ENCODE measurements at regions of chr4 and their contacts with region 1.

Region 1: GRCh38 chr4:117134386-117134785 is 49.0 kb upstream of the TRAM1L1 start:
- ATAC-seq: peak; percentile 55 to 98 (median 67)
- H3K4me3 ChIP-seq: no peak overlapping the region
- H3K27ac ChIP-seq: no peak overlapping the region
- H3K4me1 ChIP-seq: no peaks in the 10 kb centered on the region

Region 2: DNA sequence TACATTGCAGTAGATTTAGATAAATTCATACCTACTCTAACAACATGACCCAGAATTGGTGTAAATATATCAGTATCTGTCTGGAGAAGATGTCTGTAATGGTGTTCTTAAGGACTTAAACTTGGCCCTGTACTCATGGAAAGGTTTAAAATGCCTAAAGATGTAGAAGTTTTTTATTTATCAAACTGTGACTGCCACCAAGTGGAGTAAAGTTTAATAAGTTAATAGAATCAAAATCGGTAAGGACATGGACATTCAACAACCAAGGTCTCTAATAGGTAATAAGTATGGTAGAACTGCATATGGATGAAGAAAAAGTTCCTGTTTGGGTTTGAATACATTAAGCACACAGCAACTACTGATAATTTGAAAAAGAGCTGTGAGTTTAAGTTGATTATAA is 425.9 kb after region 1 on chr4:
- in situ Hi-C with region 1: loop called in 2 of 9 experiments (anchors 25 kb)
- ATAC-seq: peak in 1 of 8 experiments; percentile 42
- H3K4me3 ChIP-seq: no peak overlapping the region
- H3K27ac ChIP-seq: no peak overlapping the region
- H3K4me1 ChIP-seq: no peaks in the 10 kb centered on the region

Region 3: GRCh38 chr4:118034053-118034785 is 899.8 kb after region 1 on chr4 and contains the start of gene NDST3:
- in situ Hi-C with region 1: loop called in 3 of 9 experiments (anchors 25 kb)
- ATAC-seq: peak; percentile 15 to 75 (median 68)
- H3K4me3 ChIP-seq: peak within 1 kb of the TSS; percentile 66 to 93 (median 71)
- H3K27ac ChIP-seq: peak within 1 kb of the TSS; percentile 23 to 77
- H3K4me1 ChIP-seq: peaks cover 0 to 9% of the 10 kb centered on the region in 2 donors
- total RNA-seq, gene NDST3: 1.3 to 31.4 (median 3.7) TPM

Region 4: GRCh38 chr4:118225511-118225910 is 1091.1 kb after region 1 on chr4:
- in situ Hi-C with region 1: loop called in 1 of 9 experiments (anchors 25 kb)
- ATAC-seq: no peak
- H3K4me3 ChIP-seq: no peak overlapping the region
- H3K27ac ChIP-seq: no peak overlapping the region
- H3K4me1 ChIP-seq: peaks cover 0 to 3% of the 10 kb centered on the region in 2 donors

Region 5: GRCh38 chr4:118270492-118270891 is 1136.1 kb after region 1 on chr4:
- in situ Hi-C with region 1: loop called in 1 of 9 experiments (anchors 25 kb)
- ATAC-seq: peak in 3 of 8 experiments; percentile 22 to 42 (median 28)
- H3K4me3 ChIP-seq: no peak overlapping the region
- H3K27ac ChIP-seq: no peak overlapping the region
- H3K4me1 ChIP-seq: no peaks in the 10 kb centered on the region